Left cardiac atrium (tissue), 4 donors: ENCODE measurements at regions of chrX and their contacts with region 1.

Region 1: DNA sequence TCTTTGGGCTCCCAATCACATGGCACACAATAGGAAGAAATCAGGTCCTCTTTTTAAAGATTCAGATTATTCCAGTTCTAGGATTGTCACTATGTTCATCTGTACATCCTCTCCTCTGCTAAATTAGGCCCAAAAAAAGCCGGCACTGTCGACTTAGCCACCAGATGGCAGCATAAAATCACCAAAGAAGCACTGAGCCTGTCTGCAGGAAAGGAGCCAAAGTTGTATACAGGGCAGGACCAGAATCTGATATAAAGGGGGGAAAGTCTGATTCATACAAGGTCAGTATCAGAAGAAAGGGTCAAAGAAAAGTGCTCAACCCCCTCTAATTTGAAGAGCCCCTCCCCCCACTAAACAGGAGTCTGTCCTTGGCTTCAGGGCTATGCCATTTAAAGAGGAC is 292.5 kb downstream of the CHIC1 start:
- DNase-seq: peak; percentile 62
- ATAC-seq: peak in 1 of 2 donors; percentile 52

Region 2: GRCh38 chrX:73182502-73183114 is 672.9 kb before region 1 on chrX:
- intact Hi-C with region 1: no loop called
- DNase-seq: no peak
- ATAC-seq: no peak

Region 3: GRCh38 chrX:73943693-73944562 is 88.4 kb after region 1 on chrX:
- intact Hi-C with region 1: loop called in 1 of 2 experiments (anchors 5 kb)
- DNase-seq: peak; percentile 93
- ATAC-seq: peak; percentile 100

Region 4: GRCh38 chrX:73977534-73978169 is 122.1 kb after region 1 on chrX:
- intact Hi-C with region 1: no loop called
- DNase-seq: no peak
- ATAC-seq: no peak

Region 5: DNA sequence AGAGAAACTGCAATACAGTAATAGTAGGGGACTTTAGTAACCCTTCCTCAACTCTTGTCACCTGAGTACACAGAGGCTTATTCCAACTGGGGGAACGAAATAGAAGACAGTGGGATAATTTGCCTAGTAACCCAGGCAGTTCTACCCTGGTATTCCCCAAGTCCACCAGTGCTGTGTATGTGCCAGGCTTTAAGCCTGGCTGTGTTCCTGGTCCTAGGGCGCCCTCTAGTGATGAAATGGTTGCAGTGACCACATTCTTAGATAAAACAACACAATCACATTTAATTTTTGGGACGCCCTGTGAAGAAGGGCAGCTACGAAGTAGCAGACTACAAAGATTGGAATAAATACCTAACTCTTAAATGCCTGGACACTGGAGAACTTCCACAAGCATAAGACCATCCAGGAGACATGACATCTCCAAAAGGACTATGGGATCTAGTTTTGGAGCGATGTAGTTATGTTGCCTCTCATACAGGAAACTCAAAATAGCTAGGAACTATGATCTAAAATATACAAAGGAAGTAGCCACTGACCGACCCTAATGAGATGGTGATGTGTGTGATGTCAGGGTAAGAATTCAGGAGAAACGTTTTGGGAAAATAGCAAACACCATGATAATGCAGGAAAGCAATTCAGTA is 160.0 kb after region 1 on chrX:
- intact Hi-C with region 1: loop called (anchors 1 to 5 kb)
- DNase-seq: peak; percentile 60
- ATAC-seq: peak; percentile 70 to 74

Region 6: GRCh38 chrX:74133156-74133796 is 277.7 kb after region 1 on chrX:
- intact Hi-C with region 1: loop called in 1 of 2 experiments (anchors 5 kb)
- DNase-seq: no peak
- ATAC-seq: peak; percentile 49 to 68

Region 7: DNA sequence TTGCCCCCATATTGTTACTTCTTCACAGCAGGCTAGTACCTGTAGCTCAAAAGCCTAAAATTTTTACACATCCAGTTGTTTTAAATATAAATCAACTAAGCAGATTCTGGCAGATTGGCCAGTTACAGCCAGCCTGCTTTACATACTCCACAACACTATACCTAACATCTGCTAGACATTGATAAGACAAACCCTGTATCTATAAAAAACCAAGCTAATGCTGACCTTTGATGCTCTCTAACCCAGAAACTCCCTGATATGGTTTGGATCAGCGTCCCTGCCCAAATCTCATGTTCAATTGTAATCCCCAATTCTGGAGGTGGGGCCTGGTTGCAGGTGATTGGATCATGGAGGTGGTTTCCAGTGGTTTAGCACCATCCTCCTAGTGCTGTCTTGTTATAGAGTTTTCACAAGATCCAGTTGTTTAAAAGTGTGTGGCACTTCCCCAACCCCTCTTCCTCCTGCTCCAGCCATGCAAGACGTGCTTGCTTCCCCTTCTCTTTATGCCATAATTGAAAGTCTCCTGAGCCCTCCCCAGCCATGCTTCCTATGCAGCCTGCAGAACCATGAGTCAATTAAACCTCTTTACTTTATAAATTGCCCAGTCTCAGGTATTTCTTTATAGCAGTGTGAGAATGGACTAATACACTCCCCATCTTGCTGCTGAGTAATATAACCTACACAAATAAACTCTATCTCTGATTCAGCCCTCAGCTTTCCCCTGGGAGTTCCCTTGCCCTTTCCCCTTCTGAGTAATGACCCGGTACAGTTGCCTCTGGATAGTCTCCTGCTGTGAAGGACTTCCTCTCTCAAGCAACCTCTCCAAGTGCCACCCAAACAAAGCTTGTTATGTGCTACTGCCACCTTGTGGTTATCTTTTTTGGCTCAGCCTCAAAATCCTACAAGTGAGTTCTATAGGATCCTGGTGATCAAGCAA is 488.1 kb after region 1 on chrX:
- intact Hi-C with region 1: loop called (anchors 5 to 10 kb)
- DNase-seq: peak; percentile 53
- ATAC-seq: peak; percentile 78 to 96